GM10248 (cell line): ENCODE measurements at regions of chr15 and their contacts with region 1.

Region 1: GRCh38 chr15:50544368-50544767 is 2.1 kb downstream of the USP50 start:
- DNase-seq: no peak
- CTCF ChIP-seq: no peak

Region 2: GRCh38 chr15:50744601-50745000 is 200.2 kb after region 1 on chr15:
- CTCF ChIA-PET with region 1: no interaction called
- POLR2A ChIA-PET with region 1: interaction called, 10 read pairs
- DNase-seq: no peak
- CTCF ChIP-seq: no peak